Naive thymus-derived CD4-positive, alpha-beta T cell (primary cell): ENCODE measurements at regions of chr4 and their contacts with region 1.

Region 1: GRCh38 chr4:8198906-8199593 is at the start of gene SH3TC1:
- DNase-seq: peak; percentile 39 to 78 (median 57)
- ATAC-seq: peak; percentile 84
- H3K4me3 ChIP-seq: peak within 1 kb of the TSS; percentile 91
- H3K4me3 Mint-ChIP-seq: peak within 1 kb of the TSS; percentile 89 to 98 (median 96)
- H3K27ac ChIP-seq: peak within 1 kb of the TSS; percentile 84
- H3K27ac Mint-ChIP-seq: peak within 1 kb of the TSS; percentile 90 to 99 (median 96)
- H3K4me1 ChIP-seq: peaks cover 22 to 27% of the 10 kb centered on the region in 2 donors
- H3K4me1 Mint-ChIP-seq: peaks cover 29 to 43% (median 42%) of the 10 kb centered on the region in 7 donors
- H3K27me3 ChIP-seq: no peaks in the 10 kb centered on the region
- H3K27me3 Mint-ChIP-seq: peaks cover 0 to 3% (median 0%) of the 10 kb centered on the region in 5 donors
- total RNA-seq, gene SH3TC1: 33.8 to 120 (median 41.2) TPM

Region 2: DNA sequence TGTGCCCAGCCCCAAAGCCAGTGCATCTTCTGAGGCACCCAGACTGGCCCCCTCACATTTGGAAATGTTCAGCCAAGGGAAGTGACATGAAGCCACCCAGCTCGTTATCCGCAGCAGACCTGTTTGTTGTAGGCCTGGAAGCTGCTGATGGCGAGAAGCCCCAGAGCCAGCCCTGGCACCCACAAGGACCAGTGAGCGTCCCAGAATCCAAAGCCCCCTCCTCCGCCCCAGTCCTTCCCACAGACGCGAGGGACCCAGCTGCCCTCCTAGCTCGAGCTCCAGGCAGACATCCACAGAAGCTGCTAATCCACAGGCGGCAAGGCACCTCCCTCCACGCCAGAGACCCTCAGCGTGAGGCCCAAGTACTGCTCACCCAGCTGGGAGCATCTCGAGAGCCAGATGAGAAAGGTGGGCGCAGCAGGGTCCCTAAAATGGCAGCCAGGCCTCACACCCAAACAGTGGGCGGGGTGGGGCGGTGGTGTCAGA is 47.8 kb before region 1 on chr4:
- CTCF ChIA-PET with region 1: no interaction called
- POLR2A ChIA-PET with region 1: no interaction called
- intact Hi-C with region 1: no loop called
- DNase-seq: no peak
- ATAC-seq: no peak
- H3K4me3 ChIP-seq: no peak overlapping the region
- H3K4me3 Mint-ChIP-seq: no peak overlapping the region
- H3K27ac ChIP-seq: no peak overlapping the region
- H3K27ac Mint-ChIP-seq: no peak overlapping the region
- H3K4me1 ChIP-seq: no peaks in the 10 kb centered on the region
- H3K4me1 Mint-ChIP-seq: peaks cover 0 to 3% (median 0%) of the 10 kb centered on the region in 7 donors
- H3K27me3 ChIP-seq: no peaks in the 10 kb centered on the region
- H3K27me3 Mint-ChIP-seq: peaks cover 0 to 3% (median 0%) of the 10 kb centered on the region in 5 donors

Region 3: DNA sequence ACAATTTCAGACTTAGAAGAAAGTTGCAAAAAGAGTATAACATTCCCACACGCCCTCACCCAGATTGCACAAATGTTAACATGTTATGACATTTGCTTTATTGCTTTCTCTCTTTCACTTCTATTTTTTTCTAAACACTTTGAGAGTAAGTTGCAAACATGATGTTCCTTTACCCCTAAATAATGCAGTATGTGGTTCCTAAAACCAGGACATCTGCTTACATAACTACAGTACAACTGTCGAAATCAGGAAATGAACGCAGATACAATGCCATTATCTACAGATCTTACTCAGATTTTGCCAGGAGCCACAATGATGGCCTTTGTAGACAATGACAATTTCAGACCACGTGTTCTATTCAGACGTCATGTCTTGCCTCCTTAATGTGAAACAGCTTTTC is 22.4 kb after region 1 on chr4:
- CTCF ChIA-PET with region 1: no interaction called
- POLR2A ChIA-PET with region 1: interaction called, 3 read pairs
- intact Hi-C with region 1: loop called in 1 of 2 experiments (anchors 2 kb)
- DNase-seq: peak in 6 of 9 donors; percentile 61 to 77 (median 75)
- ATAC-seq: peak; percentile 87
- H3K4me3 ChIP-seq: no peak overlapping the region
- H3K4me3 Mint-ChIP-seq: peak overlapping the region in 4 of 10 donors; percentile 7 to 41 (median 16)
- H3K27ac ChIP-seq: peak overlapping the region; percentile 59
- H3K27ac Mint-ChIP-seq: peak overlapping the region; percentile 42 to 90 (median 81)
- H3K4me1 ChIP-seq: peaks cover 12 to 33% of the 10 kb centered on the region in 2 donors
- H3K4me1 Mint-ChIP-seq: peaks cover 16 to 33% (median 24%) of the 10 kb centered on the region in 7 donors
- H3K27me3 ChIP-seq: no peaks in the 10 kb centered on the region
- H3K27me3 Mint-ChIP-seq: no peaks in the 10 kb centered on the region

Region 4: GRCh38 chr4:8228319-8229250 is 29.5 kb after region 1 on chr4:
- CTCF ChIA-PET with region 1: no interaction called
- POLR2A ChIA-PET with region 1: interaction called, 10 read pairs
- intact Hi-C with region 1: loop called (anchors 1 to 2 kb)
- DNase-seq: peak; percentile 35 to 80 (median 77)
- ATAC-seq: peak; percentile 83
- H3K4me3 ChIP-seq: peak overlapping the region; percentile 11
- H3K4me3 Mint-ChIP-seq: peak overlapping the region in 9 of 10 donors; percentile 48 to 87 (median 71)
- H3K27ac ChIP-seq: peak overlapping the region; percentile 55
- H3K27ac Mint-ChIP-seq: peak overlapping the region; percentile 27 to 97 (median 86)
- H3K4me1 ChIP-seq: peaks cover 20 to 56% of the 10 kb centered on the region in 2 donors
- H3K4me1 Mint-ChIP-seq: peaks cover 16 to 50% (median 28%) of the 10 kb centered on the region in 7 donors
- H3K27me3 ChIP-seq: no peaks in the 10 kb centered on the region
- H3K27me3 Mint-ChIP-seq: no peaks in the 10 kb centered on the region

Region 5: GRCh38 chr4:8440492-8441341 is 241.7 kb after region 1 on chr4 and contains the starts of genes ACOX3 and TRMT44:
- CTCF ChIA-PET with region 1: no interaction called
- POLR2A ChIA-PET with region 1: no interaction called
- intact Hi-C with region 1: loop called (anchors 1 kb)
- DNase-seq: peak; percentile 89 to 100 (median 97)
- ATAC-seq: peak; percentile 97
- H3K4me3 ChIP-seq: peak within 1 kb of the TSS; percentile 92
- H3K4me3 Mint-ChIP-seq: peak within 1 kb of the TSS; percentile 93 to 100 (median 96)
- H3K27ac ChIP-seq: peak within 1 kb of the TSS; percentile 89
- H3K27ac Mint-ChIP-seq: peak within 1 kb of the TSS; percentile 98 to 100 (median 99)
- H3K4me1 ChIP-seq: peaks cover 31 to 37% of the 10 kb centered on the region in 2 donors
- H3K4me1 Mint-ChIP-seq: peaks cover 62 to 89% (median 81%) of the 10 kb centered on the region in 7 donors
- H3K27me3 ChIP-seq: no peaks in the 10 kb centered on the region
- H3K27me3 Mint-ChIP-seq: peaks cover 0 to 2% (median 0%) of the 10 kb centered on the region in 5 donors
- total RNA-seq, gene ACOX3: 10.9 to 20.5 (median 14.8) TPM
- total RNA-seq, gene TRMT44: 28.5 to 33.7 (median 29.6) TPM